ENCODE measurements at regions of chr6 and their contacts with region 1.

Region 1: GRCh38 chr6:130322673-130323268 is 43.0 kb upstream of the TMEM200A start:
- DNase-seq: peak in 1 of 2 donors; percentile 14
- ATAC-seq: no peak
- H3K4me3 ChIP-seq: no peak overlapping the region
- H3K27ac ChIP-seq: no peak overlapping the region
- H3K4me1 ChIP-seq: no peaks in the 10 kb centered on the region
- H3K27me3 ChIP-seq: no peaks in the 10 kb centered on the region
- CTCF ChIP-seq: peak; percentile 45 to 81 (median 57)
- POLR2A ChIP-seq: no peak

Region 2: GRCh38 chr6:129073691-129074395 is 1248.9 kb before region 1 on chr6:
- in situ Hi-C with region 1: no loop called
- intact Hi-C with region 1: no loop called
- DNase-seq: no peak
- ATAC-seq: no peak
- H3K4me3 ChIP-seq: no peak overlapping the region
- H3K27ac ChIP-seq: peak overlapping the region in 1 of 4 donors; percentile 0
- H3K4me1 ChIP-seq: no peaks in the 10 kb centered on the region
- H3K27me3 ChIP-seq: no peaks in the 10 kb centered on the region
- CTCF ChIP-seq: no peak
- POLR2A ChIP-seq: no peak

Region 3: GRCh38 chr6:130307752-130308361 is 14.9 kb before region 1 on chr6:
- in situ Hi-C with region 1: no loop called
- intact Hi-C with region 1: no loop called
- DNase-seq: no peak
- ATAC-seq: no peak
- H3K4me3 ChIP-seq: no peak overlapping the region
- H3K27ac ChIP-seq: no peak overlapping the region
- H3K4me1 ChIP-seq: no peaks in the 10 kb centered on the region
- H3K27me3 ChIP-seq: no peaks in the 10 kb centered on the region
- CTCF ChIP-seq: no peak
- POLR2A ChIP-seq: no peak

Region 4: GRCh38 chr6:130708338-130708737 is 385.6 kb after region 1 on chr6:
- in situ Hi-C with region 1: loop called in 3 of 4 experiments (anchors 10 kb)
- intact Hi-C with region 1: no loop called
- DNase-seq: no peak
- ATAC-seq: no peak
- H3K4me3 ChIP-seq: no peak overlapping the region
- H3K27ac ChIP-seq: no peak overlapping the region
- H3K4me1 ChIP-seq: no peaks in the 10 kb centered on the region
- H3K27me3 ChIP-seq: no peaks in the 10 kb centered on the region
- CTCF ChIP-seq: no peak
- POLR2A ChIP-seq: no peak

Region 5: DNA sequence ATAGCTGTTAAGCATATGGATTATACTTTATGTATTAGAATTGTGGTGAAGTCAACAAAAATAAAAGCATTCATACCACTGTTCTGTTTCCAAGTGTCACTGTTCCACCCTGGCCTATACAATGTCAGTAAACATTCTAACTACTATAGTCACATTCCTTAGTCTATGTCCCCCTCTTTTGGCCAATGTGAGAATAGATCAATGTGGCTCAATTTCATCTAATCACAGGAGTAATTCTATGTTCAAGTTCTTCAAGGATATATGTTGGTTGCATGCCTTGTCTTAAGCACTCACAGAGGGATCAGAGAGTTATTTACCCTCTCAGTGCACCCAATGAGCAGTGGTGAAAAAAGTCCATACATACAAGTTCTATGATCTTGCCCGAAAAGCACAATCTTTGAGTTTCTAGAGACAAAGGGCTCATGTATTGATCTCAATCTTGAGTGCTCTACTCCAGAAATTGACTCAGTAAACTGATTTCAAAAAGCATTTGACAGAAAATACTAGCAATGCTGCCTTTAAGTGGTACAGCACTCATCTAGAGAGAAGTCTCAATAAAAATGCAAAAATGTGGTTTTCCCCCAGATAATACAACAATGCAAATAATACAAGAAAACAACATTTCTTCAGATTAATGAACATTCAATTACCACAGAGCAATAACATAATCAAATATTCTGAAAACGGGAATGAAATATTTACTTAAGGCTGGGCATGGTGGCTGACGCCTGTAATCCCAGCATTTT is 521.0 kb after region 1 on chr6:
- in situ Hi-C with region 1: no loop called
- intact Hi-C with region 1: loop called (anchors 10 kb)
- DNase-seq: no peak
- ATAC-seq: no peak
- H3K4me3 ChIP-seq: no peak overlapping the region
- H3K27ac ChIP-seq: no peak overlapping the region
- H3K4me1 ChIP-seq: no peaks in the 10 kb centered on the region
- H3K27me3 ChIP-seq: no peaks in the 10 kb centered on the region
- CTCF ChIP-seq: peak in 2 of 5 experiments; percentile 8 to 31
- POLR2A ChIP-seq: no peak

Region 6: GRCh38 chr6:130872250-130873095 is 549.7 kb after region 1 on chr6:
- in situ Hi-C with region 1: loop called (anchors 10 to 25 kb)
- intact Hi-C with region 1: loop called (anchors 2 kb)
- DNase-seq: peak in 1 of 2 donors; percentile 29
- ATAC-seq: no peak
- H3K4me3 ChIP-seq: no peak overlapping the region
- H3K27ac ChIP-seq: no peak overlapping the region
- H3K4me1 ChIP-seq: no peaks in the 10 kb centered on the region
- H3K27me3 ChIP-seq: no peaks in the 10 kb centered on the region
- CTCF ChIP-seq: peak; percentile 26 to 74 (median 48)
- POLR2A ChIP-seq: no peak